Heart left ventricle (tissue), 16 donors: ENCODE measurements at regions of chr12 and their contacts with region 1.

Region 1: DNA sequence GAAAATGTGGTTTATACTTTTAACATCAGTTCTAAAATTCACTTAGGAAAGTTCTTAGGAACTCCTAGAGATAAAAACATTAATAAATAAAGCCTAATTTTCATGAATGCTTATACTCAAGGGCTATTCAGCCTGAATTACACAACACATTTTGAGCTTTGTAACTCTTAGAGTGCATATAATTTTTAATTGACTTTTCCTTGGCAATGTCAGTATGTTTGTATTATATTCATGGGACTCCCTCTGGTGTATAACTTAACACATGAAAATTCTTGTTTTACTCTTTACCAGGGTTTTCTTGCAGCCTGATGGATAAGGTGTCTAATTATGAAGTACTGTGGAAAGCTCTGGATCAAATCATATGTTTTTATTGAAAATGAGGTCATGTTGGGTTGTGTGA is 150.6 kb upstream of the HMGA2 start:
- DNase-seq: no peak
- ATAC-seq: no peak
- H3K4me3 ChIP-seq: no peak overlapping the region
- H3K27ac ChIP-seq: no peak overlapping the region
- H3K4me1 ChIP-seq: no peaks in the 10 kb centered on the region
- H3K27me3 ChIP-seq: no peaks in the 10 kb centered on the region
- CTCF ChIP-seq: peak in 8 of 12 donors; percentile 7 to 45 (median 32)
- POLR2A ChIP-seq: no peak

Region 2: GRCh38 chr12:65313719-65314317 is 359.9 kb before region 1 on chr12:
- intact Hi-C with region 1: loop called in 2 of 10 experiments (anchors 10 kb)
- DNase-seq: no peak
- ATAC-seq: no peak
- H3K4me3 ChIP-seq: no peak overlapping the region
- H3K27ac ChIP-seq: no peak overlapping the region
- H3K4me1 ChIP-seq: peaks cover 0 to 6% (median 3%) of the 10 kb centered on the region in 12 donors
- H3K27me3 ChIP-seq: no peaks in the 10 kb centered on the region
- CTCF ChIP-seq: peak; percentile 22 to 55 (median 42)
- POLR2A ChIP-seq: no peak

Region 3: GRCh38 chr12:65327207-65328076 is 346.3 kb before region 1 on chr12:
- intact Hi-C with region 1: loop called in 1 of 10 experiments (anchors 10 kb)
- DNase-seq: no peak
- ATAC-seq: peak; percentile 38 to 64 (median 54)
- H3K4me3 ChIP-seq: peak overlapping the region in 2 of 12 donors; percentile 0 to 3
- H3K27ac ChIP-seq: peak overlapping the region in 7 of 12 donors; percentile 19 to 59 (median 24)
- H3K4me1 ChIP-seq: peaks cover 0 to 42% (median 6%) of the 10 kb centered on the region in 12 donors
- H3K27me3 ChIP-seq: no peaks in the 10 kb centered on the region
- CTCF ChIP-seq: no peak
- POLR2A ChIP-seq: no peak

Region 4: GRCh38 chr12:65602610-65603295 is 71.0 kb before region 1 on chr12:
- intact Hi-C with region 1: loop called in 2 of 10 experiments (anchors 5 to 10 kb)
- DNase-seq: peak; percentile 73 to 86 (median 80)
- ATAC-seq: peak; percentile 88 to 98 (median 96)
- H3K4me3 ChIP-seq: peak overlapping the region in 9 of 12 donors; percentile 18 to 51 (median 34)
- H3K27ac ChIP-seq: peak overlapping the region in 10 of 12 donors; percentile 6 to 65 (median 49)
- H3K4me1 ChIP-seq: peaks cover 0 to 25% (median 16%) of the 10 kb centered on the region in 12 donors
- H3K27me3 ChIP-seq: peaks cover 0 to 14% (median 3%) of the 10 kb centered on the region in 9 donors
- CTCF ChIP-seq: peak; percentile 60 to 85 (median 72)
- POLR2A ChIP-seq: no peak